ENCODE measurements at regions of chr7 and their contacts with region 1.

Region 1: GRCh38 chr7:68573271-68574005 is 1024.8 kb upstream of the AUTS2 start:
- DNase-seq: no peak
- H3K4me3 ChIP-seq: no peak overlapping the region
- CTCF ChIP-seq: no peak
- POLR2A ChIP-seq: no peak

Region 2: DNA sequence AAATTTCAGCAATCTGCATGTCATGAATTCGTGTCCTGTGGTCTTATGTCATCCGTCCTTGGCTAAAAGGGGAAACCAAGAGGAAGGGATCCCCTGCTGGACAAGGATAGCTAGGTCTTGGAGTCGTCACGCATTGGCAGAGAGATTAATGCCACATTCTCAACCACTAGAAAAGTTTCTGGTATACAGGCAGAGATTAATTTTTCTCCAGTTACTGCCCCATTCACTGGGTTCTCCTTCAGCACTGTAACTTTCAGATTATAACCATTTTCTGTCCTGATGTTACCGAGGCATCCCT is 35.7 kb before region 1 on chr7:
- intact Hi-C with region 1: loop called (anchors 1 kb)
- DNase-seq: no peak
- H3K4me3 ChIP-seq: no peak overlapping the region
- CTCF ChIP-seq: no peak
- POLR2A ChIP-seq: no peak

Region 3: DNA sequence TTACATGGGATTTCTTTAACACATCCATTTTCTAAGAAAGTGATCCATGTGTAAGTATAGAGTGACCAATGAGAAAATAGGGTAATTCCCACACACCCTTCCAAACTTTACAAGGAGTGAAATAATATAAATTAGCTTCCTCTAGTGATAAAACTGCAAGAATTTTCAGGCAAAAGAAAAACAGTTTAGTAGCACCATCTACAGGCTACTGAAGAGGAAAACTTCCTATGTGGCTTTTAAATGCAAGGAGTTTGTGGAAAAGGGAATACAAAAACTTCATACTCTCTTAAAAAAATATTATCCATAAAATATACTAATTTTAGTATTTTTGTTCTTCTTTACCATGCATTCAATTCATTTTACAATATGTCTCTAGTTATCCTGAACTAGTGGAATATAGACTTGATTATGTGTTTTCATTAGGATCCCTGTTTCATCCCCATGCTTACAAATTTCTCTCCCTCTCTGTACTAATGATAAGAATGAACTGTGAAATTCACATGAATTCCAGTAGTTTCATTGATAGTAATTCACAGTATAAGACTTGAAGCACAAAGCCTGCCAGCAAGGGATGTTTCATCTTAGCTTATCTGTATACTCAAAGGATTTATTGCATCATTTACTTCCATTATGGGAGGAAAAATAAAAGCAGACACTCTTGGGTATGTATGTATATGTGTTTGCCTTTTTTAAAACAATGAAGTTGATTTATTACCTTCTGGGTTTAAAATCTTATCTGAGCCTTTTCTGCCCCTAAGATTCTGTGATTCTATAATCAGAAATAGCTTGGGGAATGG is 1467.7 kb after region 1 on chr7:
- intact Hi-C with region 1: no loop called
- DNase-seq: no peak
- H3K4me3 ChIP-seq: no peak overlapping the region
- CTCF ChIP-seq: no peak
- POLR2A ChIP-seq: no peak

Measured in lower leg skin (tissue), 4 donors.